Caco-2 (cell line): ENCODE measurements at regions of chr12 and their contacts with region 1.

Region 1: DNA sequence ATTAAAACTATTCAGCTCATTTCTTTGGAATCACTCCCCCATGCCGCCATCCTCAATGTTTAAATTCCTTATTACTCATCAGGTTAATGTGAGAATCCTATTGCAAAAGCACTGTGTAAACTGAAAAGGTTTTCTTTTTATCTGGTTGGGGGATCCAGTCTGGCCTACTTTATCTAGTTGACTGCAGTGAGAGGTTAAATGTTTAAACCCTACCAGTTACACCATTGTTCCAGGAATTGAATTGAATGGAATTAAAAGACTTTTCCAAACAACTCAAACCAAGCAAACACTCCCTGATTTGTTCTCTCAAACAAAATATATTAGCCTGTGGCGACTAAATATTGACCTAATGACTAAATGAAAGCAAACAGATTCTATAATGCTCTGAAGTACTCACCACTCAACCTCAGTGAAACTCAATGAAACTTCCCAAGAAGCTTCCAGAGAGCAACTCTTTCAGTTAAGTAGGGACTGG is 100.5 kb downstream of the VEZT start:
- DNase-seq: peak; percentile 46 to 83
- H3K4me3 ChIP-seq: no peak overlapping the region
- H3K4me3 Mint-ChIP-seq: peak overlapping the region; percentile 1
- H3K27ac Mint-ChIP-seq: peak overlapping the region; percentile 58
- H3K4me1 ChIP-seq: peaks cover 54% of the 10 kb centered on the region
- H3K4me1 Mint-ChIP-seq: peaks cover 21% of the 10 kb centered on the region
- H3K27me3 ChIP-seq: no peaks in the 10 kb centered on the region
- H3K27me3 Mint-ChIP-seq: no peaks in the 10 kb centered on the region
- CTCF ChIP-seq: no peak

Region 2: DNA sequence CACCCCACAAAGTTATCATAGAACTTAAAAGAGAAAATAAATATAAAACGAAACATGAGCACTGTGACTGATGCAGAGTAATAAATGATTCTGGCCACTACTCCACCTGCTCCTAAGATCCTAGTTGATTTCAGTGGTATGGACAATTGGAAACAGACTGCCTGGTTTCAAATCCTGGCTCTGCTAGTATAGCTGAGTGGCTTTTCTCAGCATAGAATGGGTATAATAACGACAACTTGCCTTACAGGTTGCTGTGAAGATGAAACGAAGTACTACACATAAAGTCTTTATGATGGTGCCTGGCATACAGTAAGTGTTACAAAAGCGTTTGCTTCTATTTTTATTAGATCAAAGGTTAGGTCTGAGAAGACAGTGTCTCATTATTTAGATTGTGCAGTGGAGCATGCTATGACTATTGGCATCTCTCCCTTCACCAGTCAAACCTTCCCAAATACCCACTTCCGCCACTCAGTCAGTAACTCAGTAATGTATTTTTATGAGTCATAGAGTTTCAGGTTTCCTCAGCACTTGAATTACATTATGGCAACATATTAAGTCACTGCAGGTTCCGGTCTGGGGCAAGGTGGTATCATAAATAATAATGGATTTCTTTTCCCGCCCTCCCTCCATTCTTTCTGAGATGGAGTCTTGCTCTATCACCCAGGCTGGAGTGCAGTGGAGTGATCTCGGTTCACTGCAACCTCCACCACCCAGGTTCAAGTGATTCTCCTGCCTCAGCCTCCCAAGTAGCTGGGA is 215.0 kb before region 1 on chr12:
- CTCF ChIA-PET with region 1: no interaction called
- POLR2A ChIA-PET with region 1: interaction called, 10 read pairs
- intact Hi-C with region 1: no loop called
- DNase-seq: no peak
- H3K4me3 ChIP-seq: no peak overlapping the region
- H3K4me3 Mint-ChIP-seq: no peak overlapping the region
- H3K27ac Mint-ChIP-seq: no peak overlapping the region
- H3K4me1 ChIP-seq: peaks cover 23% of the 10 kb centered on the region
- H3K4me1 Mint-ChIP-seq: peaks cover 23% of the 10 kb centered on the region
- H3K27me3 ChIP-seq: no peaks in the 10 kb centered on the region
- H3K27me3 Mint-ChIP-seq: no peaks in the 10 kb centered on the region
- CTCF ChIP-seq: no peak

Region 3: GRCh38 chr12:95204141-95204866 is 113.8 kb before region 1 on chr12:
- CTCF ChIA-PET with region 1: no interaction called
- POLR2A ChIA-PET with region 1: no interaction called
- intact Hi-C with region 1: no loop called
- DNase-seq: peak; percentile 89 to 96
- H3K4me3 ChIP-seq: no peak overlapping the region
- H3K4me3 Mint-ChIP-seq: peak overlapping the region; percentile 62
- H3K27ac Mint-ChIP-seq: peak overlapping the region; percentile 82
- H3K4me1 ChIP-seq: peaks cover 61% of the 10 kb centered on the region
- H3K4me1 Mint-ChIP-seq: peaks cover 52% of the 10 kb centered on the region
- H3K27me3 ChIP-seq: no peaks in the 10 kb centered on the region
- H3K27me3 Mint-ChIP-seq: no peaks in the 10 kb centered on the region
- CTCF ChIP-seq: no peak

Region 4: GRCh38 chr12:95279856-95280255 is 38.3 kb before region 1 on chr12:
- CTCF ChIA-PET with region 1: no interaction called
- POLR2A ChIA-PET with region 1: no interaction called
- intact Hi-C with region 1: loop called (anchors 1 kb)
- DNase-seq: no peak
- H3K4me3 ChIP-seq: no peak overlapping the region
- H3K4me3 Mint-ChIP-seq: no peak overlapping the region
- H3K27ac Mint-ChIP-seq: no peak overlapping the region
- H3K4me1 ChIP-seq: peaks cover 12% of the 10 kb centered on the region
- H3K4me1 Mint-ChIP-seq: peaks cover 6% of the 10 kb centered on the region
- H3K27me3 ChIP-seq: no peaks in the 10 kb centered on the region
- H3K27me3 Mint-ChIP-seq: no peaks in the 10 kb centered on the region
- CTCF ChIP-seq: no peak

Region 5: GRCh38 chr12:95396849-95397468 is 78.9 kb after region 1 on chr12:
- CTCF ChIA-PET with region 1: no interaction called
- POLR2A ChIA-PET with region 1: no interaction called
- intact Hi-C with region 1: no loop called
- DNase-seq: no peak
- H3K4me3 ChIP-seq: no peak overlapping the region
- H3K4me3 Mint-ChIP-seq: no peak overlapping the region
- H3K27ac Mint-ChIP-seq: no peak overlapping the region
- H3K4me1 ChIP-seq: no peaks in the 10 kb centered on the region
- H3K4me1 Mint-ChIP-seq: no peaks in the 10 kb centered on the region
- H3K27me3 ChIP-seq: no peaks in the 10 kb centered on the region
- H3K27me3 Mint-ChIP-seq: no peaks in the 10 kb centered on the region
- CTCF ChIP-seq: no peak

Region 6: GRCh38 chr12:95473884-95474659 is 156.0 kb after region 1 on chr12 and contains the start of gene METAP2:
- CTCF ChIA-PET with region 1: no interaction called
- POLR2A ChIA-PET with region 1: no interaction called
- intact Hi-C with region 1: no loop called
- DNase-seq: peak; percentile 97 to 98
- H3K4me3 ChIP-seq: peak within 1 kb of the TSS; percentile 99
- H3K4me3 Mint-ChIP-seq: peak within 1 kb of the TSS; percentile 93
- H3K27ac Mint-ChIP-seq: peak within 1 kb of the TSS; percentile 97
- H3K4me1 ChIP-seq: peaks cover 13% of the 10 kb centered on the region
- H3K4me1 Mint-ChIP-seq: peaks cover 27% of the 10 kb centered on the region
- H3K27me3 ChIP-seq: no peaks in the 10 kb centered on the region
- H3K27me3 Mint-ChIP-seq: no peaks in the 10 kb centered on the region
- CTCF ChIP-seq: no peak
- total RNA-seq, gene METAP2: 134 and 138 TPM in 2 replicates